ENCODE measurements at regions of chr11 and their contacts with region 1.

Region 1: DNA sequence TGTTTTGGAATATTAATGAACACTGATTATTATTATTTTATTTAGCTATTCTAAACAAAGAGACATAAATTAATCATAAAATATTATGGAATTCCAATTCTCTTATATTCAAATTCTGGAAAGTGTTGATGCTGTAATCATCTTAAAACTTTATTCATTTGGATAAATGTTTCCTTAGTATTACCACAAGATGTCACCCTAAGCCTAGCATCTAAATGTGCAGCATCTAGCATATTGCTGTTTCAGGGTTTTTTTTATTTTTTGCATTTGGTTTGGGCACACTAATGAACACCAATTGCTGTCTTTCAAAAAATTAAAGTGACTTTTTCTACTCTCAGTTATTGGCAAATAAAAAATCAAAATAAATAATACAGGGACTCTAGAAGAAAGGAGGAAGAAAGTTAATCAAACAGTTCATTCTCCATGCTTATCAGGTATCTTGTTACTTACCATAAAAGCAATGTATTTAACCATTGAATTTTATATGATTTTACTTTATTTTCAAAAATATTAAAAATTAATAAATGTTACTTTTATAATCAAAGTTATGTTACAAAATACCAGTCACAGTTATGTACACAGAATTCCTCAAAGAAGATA is 31.8 kb downstream of the DLG2 start:
- DNase-seq: peak; percentile 54
- ATAC-seq: no peak
- H3K4me3 ChIP-seq: no peak overlapping the region
- H3K4me3 Mint-ChIP-seq: no peak overlapping the region
- H3K27ac ChIP-seq: no peak overlapping the region
- H3K27ac Mint-ChIP-seq: no peak overlapping the region
- H3K4me1 ChIP-seq: no peaks in the 10 kb centered on the region
- H3K4me1 Mint-ChIP-seq: no peaks in the 10 kb centered on the region
- H3K27me3 ChIP-seq: no peaks in the 10 kb centered on the region
- H3K27me3 Mint-ChIP-seq: no peaks in the 10 kb centered on the region
- CTCF ChIP-seq: peak; percentile 78

Region 2: GRCh38 chr11:84558085-84558905 is 1037.1 kb before region 1 on chr11:
- CTCF ChIA-PET with region 1: interaction called, 74 read pairs
- POLR2A ChIA-PET with region 1: no interaction called
- intact Hi-C with region 1: loop called (anchors 1 kb)
- DNase-seq: peak; percentile 48
- ATAC-seq: peak; percentile 54
- H3K4me3 ChIP-seq: no peak overlapping the region
- H3K4me3 Mint-ChIP-seq: no peak overlapping the region
- H3K27ac ChIP-seq: no peak overlapping the region
- H3K27ac Mint-ChIP-seq: no peak overlapping the region
- H3K4me1 ChIP-seq: no peaks in the 10 kb centered on the region
- H3K4me1 Mint-ChIP-seq: peaks cover 3% of the 10 kb centered on the region
- H3K27me3 ChIP-seq: no peaks in the 10 kb centered on the region
- H3K27me3 Mint-ChIP-seq: peaks cover 4% of the 10 kb centered on the region
- CTCF ChIP-seq: peak; percentile 85

Region 3: GRCh38 chr11:85627998-85628770 is 32.8 kb after region 1 on chr11 and contains the start of gene TMEM126B:
- CTCF ChIA-PET with region 1: interaction called, 4 read pairs
- POLR2A ChIA-PET with region 1: no interaction called
- intact Hi-C with region 1: loop called (anchors 1 kb)
- DNase-seq: peak; percentile 95
- ATAC-seq: peak; percentile 98
- H3K4me3 ChIP-seq: peak within 1 kb of the TSS; percentile 75 to 99 (median 85)
- H3K4me3 Mint-ChIP-seq: peak within 1 kb of the TSS; percentile 99
- H3K27ac ChIP-seq: peak within 1 kb of the TSS; percentile 65 to 87
- H3K27ac Mint-ChIP-seq: peak within 1 kb of the TSS; percentile 96
- H3K4me1 ChIP-seq: peaks cover 14 to 19% of the 10 kb centered on the region in 2 donors
- H3K4me1 Mint-ChIP-seq: peaks cover 28% of the 10 kb centered on the region
- H3K27me3 ChIP-seq: no peaks in the 10 kb centered on the region
- H3K27me3 Mint-ChIP-seq: peaks cover 5% of the 10 kb centered on the region
- CTCF ChIP-seq: no peak
- total RNA-seq, gene TMEM126B: 37.2 and 38.5 TPM in 2 replicates

Region 4: DNA sequence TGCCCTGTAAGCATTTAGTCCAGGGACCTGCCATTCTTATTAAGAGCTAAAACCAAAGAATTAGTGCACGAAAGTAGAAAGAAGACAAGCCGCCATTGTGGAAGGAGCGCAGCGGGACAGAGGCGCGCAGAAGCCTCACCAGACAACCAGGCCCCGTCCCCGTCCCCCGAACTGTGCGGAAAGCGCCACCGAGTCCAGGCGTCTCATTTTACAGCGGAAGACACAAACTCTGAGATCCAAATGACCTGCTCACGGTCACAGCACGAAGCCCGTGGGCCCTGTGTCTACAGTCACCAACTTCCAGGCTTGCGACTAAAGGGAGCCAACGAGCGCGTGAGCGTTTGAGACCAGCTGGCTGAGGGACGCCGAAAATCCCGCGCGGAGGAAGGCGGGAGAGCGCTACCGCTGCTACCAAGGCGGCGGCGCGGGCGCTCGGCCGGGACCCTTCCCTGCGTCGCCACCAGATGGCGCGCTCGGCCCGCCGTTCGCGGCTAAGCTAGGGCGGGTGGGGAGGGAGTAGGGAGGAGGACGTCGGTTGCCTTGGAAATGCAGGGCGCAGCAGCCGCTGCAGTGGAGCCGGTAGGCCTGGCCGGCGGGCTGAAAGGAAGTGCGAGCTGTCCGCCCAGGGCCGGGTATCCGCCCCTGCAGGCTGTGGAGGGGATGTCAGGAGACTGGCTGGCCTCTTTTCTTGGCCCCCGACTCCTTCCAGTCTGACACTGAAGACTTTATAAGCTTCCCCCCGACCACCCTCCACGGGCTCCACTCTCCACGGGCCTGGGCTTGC is 259.4 kb after region 1 on chr11:
- CTCF ChIA-PET with region 1: interaction called, 5 read pairs
- POLR2A ChIA-PET with region 1: no interaction called
- intact Hi-C with region 1: loop called (anchors 2 kb)
- DNase-seq: peak; percentile 92
- ATAC-seq: peak; percentile 96
- H3K4me3 ChIP-seq: peak overlapping the region; percentile 51 to 74 (median 69)
- H3K4me3 Mint-ChIP-seq: peak overlapping the region; percentile 89
- H3K27ac ChIP-seq: peak overlapping the region; percentile 20 to 77
- H3K27ac Mint-ChIP-seq: peak overlapping the region; percentile 84
- H3K4me1 ChIP-seq: peaks cover 3 to 11% of the 10 kb centered on the region in 2 donors
- H3K4me1 Mint-ChIP-seq: peaks cover 12% of the 10 kb centered on the region
- H3K27me3 ChIP-seq: no peaks in the 10 kb centered on the region
- H3K27me3 Mint-ChIP-seq: peaks cover 11% of the 10 kb centered on the region
- CTCF ChIP-seq: peak; percentile 92

Region 5: GRCh38 chr11:86151174-86152005 is 556.0 kb after region 1 on chr11:
- CTCF ChIA-PET with region 1: no interaction called
- POLR2A ChIA-PET with region 1: interaction called, 10 read pairs
- intact Hi-C with region 1: no loop called
- DNase-seq: no peak
- ATAC-seq: no peak
- H3K4me3 ChIP-seq: no peak overlapping the region
- H3K4me3 Mint-ChIP-seq: no peak overlapping the region
- H3K27ac ChIP-seq: no peak overlapping the region
- H3K27ac Mint-ChIP-seq: peak overlapping the region; percentile 16
- H3K4me1 ChIP-seq: peaks cover 0 to 13% of the 10 kb centered on the region in 2 donors
- H3K4me1 Mint-ChIP-seq: peaks cover 7% of the 10 kb centered on the region
- H3K27me3 ChIP-seq: no peaks in the 10 kb centered on the region
- H3K27me3 Mint-ChIP-seq: no peaks in the 10 kb centered on the region
- CTCF ChIP-seq: no peak

Region 6: GRCh38 chr11:86456052-86456939 is 860.9 kb after region 1 on chr11:
- CTCF ChIA-PET with region 1: no interaction called
- POLR2A ChIA-PET with region 1: no interaction called
- intact Hi-C with region 1: loop called (anchors 10 kb)
- DNase-seq: peak; percentile 67
- ATAC-seq: peak; percentile 54
- H3K4me3 ChIP-seq: no peak overlapping the region
- H3K4me3 Mint-ChIP-seq: no peak overlapping the region
- H3K27ac ChIP-seq: no peak overlapping the region
- H3K27ac Mint-ChIP-seq: no peak overlapping the region
- H3K4me1 ChIP-seq: peaks cover 0 to 3% of the 10 kb centered on the region in 2 donors
- H3K4me1 Mint-ChIP-seq: no peaks in the 10 kb centered on the region
- H3K27me3 ChIP-seq: no peaks in the 10 kb centered on the region
- H3K27me3 Mint-ChIP-seq: peaks cover 4% of the 10 kb centered on the region
- CTCF ChIP-seq: peak; percentile 91

Measured in B cell (primary cell).